RWPE1 (cell line): ENCODE measurements at regions of chr10 and their contacts with region 1.

Region 1: DNA sequence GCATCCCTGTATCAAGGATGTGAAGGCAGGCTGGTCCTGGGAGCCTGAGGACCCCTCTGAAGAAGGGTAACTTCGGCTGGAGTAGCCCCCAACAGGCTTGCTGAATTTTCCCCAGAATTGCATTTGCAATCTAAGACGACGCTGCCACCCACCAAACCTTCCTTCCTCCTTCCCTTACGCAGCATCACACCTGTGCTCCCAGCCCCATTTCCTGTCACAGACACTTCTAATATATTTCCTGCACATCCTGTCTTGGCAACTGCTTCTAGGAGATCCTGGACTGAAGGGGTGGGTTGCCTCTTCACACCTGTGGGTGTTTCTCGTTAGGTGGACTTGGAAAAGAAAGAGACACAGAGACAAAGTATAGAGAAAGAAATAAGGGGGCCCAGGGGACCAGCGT is 9.4 kb upstream of the PGAM1 start:
- DNase-seq: no peak
- H3K27ac ChIP-seq: no peak overlapping the region
- CTCF ChIP-seq: no peak

Region 2: GRCh38 chr10:97623277-97623676 is 206.7 kb after region 1 on chr10:
- CTCF ChIA-PET with region 1: no interaction called
- POLR2A ChIA-PET with region 1: interaction called, 20 read pairs
- DNase-seq: no peak
- H3K27ac ChIP-seq: no peak overlapping the region
- CTCF ChIP-seq: no peak